B cell (primary cell): ENCODE measurements at regions of chr6 and their contacts with region 1.

Region 1: GRCh38 chr6:150417899-150418826 is 49.4 kb downstream of the IYD start:
- DNase-seq: peak; percentile 84
- ATAC-seq: peak; percentile 82
- H3K4me3 ChIP-seq: peak overlapping the region; percentile 45 to 75 (median 63)
- H3K4me3 Mint-ChIP-seq: peak overlapping the region; percentile 91
- H3K27ac ChIP-seq: peak overlapping the region in 1 of 2 donors; percentile 73
- H3K27ac Mint-ChIP-seq: peak overlapping the region; percentile 22
- H3K4me1 ChIP-seq: peaks cover 0 to 5% of the 10 kb centered on the region in 2 donors
- H3K4me1 Mint-ChIP-seq: peaks cover 14% of the 10 kb centered on the region
- H3K27me3 ChIP-seq: peaks cover 0 to 4% (median 2%) of the 10 kb centered on the region in 4 experiments
- H3K27me3 Mint-ChIP-seq: peaks cover 23% of the 10 kb centered on the region
- CTCF ChIP-seq: peak; percentile 79

Region 2: DNA sequence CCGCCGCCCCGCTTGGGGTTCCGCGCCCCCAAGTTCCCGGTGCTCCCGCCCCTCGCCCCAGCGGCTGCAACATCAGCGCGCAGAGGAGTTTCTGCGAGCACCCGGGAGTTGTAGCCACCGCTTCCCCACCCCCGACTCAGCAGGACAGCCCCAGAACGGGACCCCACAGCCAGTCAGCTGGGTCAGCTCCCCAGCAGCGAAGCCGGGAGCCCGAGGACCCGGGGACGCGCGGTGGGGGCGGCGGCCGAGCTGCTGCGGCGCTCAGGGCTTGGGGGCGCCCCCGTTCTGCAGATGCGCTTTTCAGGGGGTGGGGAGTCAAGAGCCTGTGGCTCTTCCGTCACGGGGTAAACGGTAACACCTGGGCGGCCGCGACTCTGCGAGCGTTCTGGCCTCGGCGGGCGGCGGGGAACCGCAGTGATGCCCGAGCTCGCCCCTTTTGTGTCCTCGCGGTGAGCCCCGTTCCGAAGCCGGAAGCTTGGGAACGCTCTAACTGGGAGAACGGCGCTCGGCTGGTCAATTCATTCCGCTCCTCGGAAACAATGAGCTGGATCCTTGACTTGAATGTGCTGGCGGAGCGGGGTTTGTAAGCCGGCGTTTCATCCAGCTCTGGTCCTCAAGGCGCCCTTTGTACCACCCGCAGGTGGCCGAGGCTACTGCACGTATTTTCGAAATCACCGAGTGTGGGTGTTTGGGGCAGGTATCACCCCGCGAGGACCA is 182.3 kb after region 1 on chr6:
- CTCF ChIA-PET with region 1: interaction called, 71 read pairs
- POLR2A ChIA-PET with region 1: interaction called, 5 read pairs
- intact Hi-C with region 1: loop called (anchors 1 kb)
- DNase-seq: peak; percentile 95
- ATAC-seq: peak; percentile 75
- H3K4me3 ChIP-seq: peak overlapping the region; percentile 56 to 83 (median 73)
- H3K4me3 Mint-ChIP-seq: peak overlapping the region; percentile 99
- H3K27ac ChIP-seq: peak overlapping the region; percentile 97 to 99
- H3K27ac Mint-ChIP-seq: peak overlapping the region; percentile 99
- H3K4me1 ChIP-seq: peaks cover 52 to 54% of the 10 kb centered on the region in 2 donors
- H3K4me1 Mint-ChIP-seq: peaks cover 65% of the 10 kb centered on the region
- H3K27me3 ChIP-seq: no peaks in the 10 kb centered on the region
- H3K27me3 Mint-ChIP-seq: no peaks in the 10 kb centered on the region
- CTCF ChIP-seq: peak; percentile 76

Region 3: DNA sequence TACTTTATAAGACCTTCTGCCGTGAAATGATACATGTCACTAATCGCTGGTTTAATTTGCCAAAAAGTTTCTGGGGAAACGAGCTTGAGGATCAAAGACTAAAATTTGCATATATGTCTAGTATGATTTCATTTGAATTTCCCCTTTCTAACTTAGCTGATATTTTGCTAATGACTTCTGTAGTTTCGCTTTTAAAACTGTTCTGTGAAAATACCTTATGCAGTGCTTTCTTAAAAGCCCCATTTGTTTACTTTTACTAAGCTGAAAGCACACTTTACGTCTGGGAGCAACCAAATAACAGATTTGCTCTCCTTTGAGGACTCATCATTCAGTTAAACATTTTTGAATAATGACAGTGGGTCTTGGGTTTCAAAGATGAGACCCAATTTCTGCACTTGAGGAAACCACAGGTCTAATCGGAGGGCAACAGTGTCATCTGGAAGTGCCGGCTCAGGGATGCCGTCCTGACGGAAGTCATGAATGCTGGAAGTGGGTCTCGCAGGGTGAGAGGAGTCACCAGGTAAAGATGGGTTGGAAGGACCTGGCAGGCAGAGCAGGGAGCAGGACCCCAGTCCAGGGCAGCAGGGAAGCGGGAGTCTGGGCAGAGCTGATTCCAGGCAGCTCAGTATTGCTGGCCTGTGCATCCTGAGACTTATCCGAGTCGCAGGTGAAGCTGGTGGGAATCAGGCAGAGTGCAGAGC is 214.8 kb after region 1 on chr6:
- CTCF ChIA-PET with region 1: interaction called, 16 read pairs
- POLR2A ChIA-PET with region 1: no interaction called
- intact Hi-C with region 1: loop called (anchors 5 kb)
- DNase-seq: peak; percentile 80
- ATAC-seq: peak; percentile 40
- H3K4me3 ChIP-seq: peak overlapping the region; percentile 55 to 85 (median 79)
- H3K4me3 Mint-ChIP-seq: peak overlapping the region; percentile 98
- H3K27ac ChIP-seq: peak overlapping the region; percentile 91 to 94
- H3K27ac Mint-ChIP-seq: peak overlapping the region; percentile 93
- H3K4me1 ChIP-seq: peaks cover 79 to 81% of the 10 kb centered on the region in 2 donors
- H3K4me1 Mint-ChIP-seq: peaks cover 85% of the 10 kb centered on the region
- H3K27me3 ChIP-seq: no peaks in the 10 kb centered on the region
- H3K27me3 Mint-ChIP-seq: no peaks in the 10 kb centered on the region
- CTCF ChIP-seq: no peak

Region 4: DNA sequence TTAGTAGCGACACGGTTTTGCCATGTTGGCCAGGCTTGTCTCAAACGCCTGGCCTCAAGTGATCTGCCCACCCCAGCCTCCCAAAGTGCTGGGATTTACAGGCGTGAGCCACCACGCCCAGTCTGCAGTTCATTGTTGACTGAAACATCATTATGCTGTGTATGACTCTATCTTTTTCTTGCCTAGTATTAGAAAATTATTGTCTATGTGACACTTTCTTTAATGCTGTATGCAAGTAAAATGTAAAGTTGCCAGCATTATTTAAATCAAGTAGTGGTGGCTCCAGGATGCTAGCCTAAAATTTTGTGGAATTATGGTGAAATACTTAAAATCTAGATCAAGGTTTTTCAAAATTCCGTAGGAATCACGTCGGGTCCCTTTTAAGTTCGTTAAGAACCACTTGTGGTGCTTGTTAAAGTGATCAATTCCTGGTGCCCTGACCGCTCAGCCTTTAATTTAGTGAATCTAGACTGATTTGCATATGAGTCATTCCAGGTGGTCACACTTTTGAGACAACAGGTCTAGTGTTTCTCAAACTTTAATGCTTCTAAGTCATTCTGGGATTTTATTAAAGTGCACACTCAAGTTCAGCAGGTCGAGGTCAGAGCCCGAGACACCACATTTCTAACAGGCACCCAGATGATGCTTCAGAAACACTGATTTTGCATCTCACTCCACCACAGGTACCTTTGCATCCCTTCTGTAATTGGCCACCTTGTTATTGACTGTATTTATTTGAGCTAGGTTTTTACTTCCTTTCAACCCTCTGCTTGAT is 314.8 kb after region 1 on chr6:
- CTCF ChIA-PET with region 1: interaction called, 19 read pairs
- POLR2A ChIA-PET with region 1: no interaction called
- intact Hi-C with region 1: no loop called
- DNase-seq: peak; percentile 19
- ATAC-seq: peak; percentile 60
- H3K4me3 ChIP-seq: no peak overlapping the region
- H3K4me3 Mint-ChIP-seq: peak overlapping the region; percentile 30
- H3K27ac ChIP-seq: peak overlapping the region in 1 of 2 donors; percentile 20
- H3K27ac Mint-ChIP-seq: peak overlapping the region; percentile 73
- H3K4me1 ChIP-seq: peaks cover 8 to 14% of the 10 kb centered on the region in 2 donors
- H3K4me1 Mint-ChIP-seq: peaks cover 53% of the 10 kb centered on the region
- H3K27me3 ChIP-seq: no peaks in the 10 kb centered on the region
- H3K27me3 Mint-ChIP-seq: no peaks in the 10 kb centered on the region
- CTCF ChIP-seq: no peak

Region 5: DNA sequence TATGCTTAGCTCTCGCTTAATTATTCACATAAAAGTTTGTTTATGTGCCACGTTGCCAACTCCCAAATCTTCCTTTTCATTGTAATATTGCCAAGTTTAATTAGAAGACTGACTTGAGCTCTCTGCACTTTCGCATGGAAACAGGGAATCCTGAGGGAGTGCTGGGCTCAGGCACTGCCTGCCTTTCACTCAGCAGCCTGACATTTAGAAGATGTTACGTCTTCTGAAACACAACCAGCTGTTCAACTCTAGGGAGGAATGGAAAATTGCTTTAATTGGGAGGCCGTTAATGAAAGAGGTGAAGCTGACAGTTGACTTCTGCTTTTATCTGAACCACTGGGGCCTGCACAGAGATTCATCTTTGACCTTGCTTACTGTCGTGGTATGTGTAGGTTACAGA is 369.9 kb after region 1 on chr6:
- CTCF ChIA-PET with region 1: interaction called, 16 read pairs
- POLR2A ChIA-PET with region 1: no interaction called
- intact Hi-C with region 1: no loop called
- DNase-seq: no peak
- ATAC-seq: no peak
- H3K4me3 ChIP-seq: no peak overlapping the region
- H3K4me3 Mint-ChIP-seq: no peak overlapping the region
- H3K27ac ChIP-seq: peak overlapping the region in 1 of 2 donors; percentile 58
- H3K27ac Mint-ChIP-seq: peak overlapping the region; percentile 66
- H3K4me1 ChIP-seq: peaks cover 0 to 4% of the 10 kb centered on the region in 2 donors
- H3K4me1 Mint-ChIP-seq: peaks cover 19% of the 10 kb centered on the region
- H3K27me3 ChIP-seq: no peaks in the 10 kb centered on the region
- H3K27me3 Mint-ChIP-seq: no peaks in the 10 kb centered on the region
- CTCF ChIP-seq: no peak

Region 6: GRCh38 chr6:150865406-150866146 is 447.4 kb after region 1 on chr6 and contains the start of gene MTHFD1L:
- CTCF ChIA-PET with region 1: interaction called, 3 read pairs
- POLR2A ChIA-PET with region 1: no interaction called
- intact Hi-C with region 1: loop called (anchors 2 kb)
- DNase-seq: peak; percentile 84
- ATAC-seq: peak; percentile 72
- H3K4me3 ChIP-seq: peak within 1 kb of the TSS in 4 of 5 experiments; percentile 57 to 73 (median 66)
- H3K4me3 Mint-ChIP-seq: peak within 1 kb of the TSS; percentile 85
- H3K27ac ChIP-seq: peak within 1 kb of the TSS in 1 of 2 donors; percentile 63
- H3K27ac Mint-ChIP-seq: peak within 1 kb of the TSS; percentile 65
- H3K4me1 ChIP-seq: peaks cover 9 to 13% of the 10 kb centered on the region in 2 donors
- H3K4me1 Mint-ChIP-seq: peaks cover 19% of the 10 kb centered on the region
- H3K27me3 ChIP-seq: no peaks in the 10 kb centered on the region
- H3K27me3 Mint-ChIP-seq: no peaks in the 10 kb centered on the region
- CTCF ChIP-seq: peak; percentile 54
- total RNA-seq, gene MTHFD1L: 16.1 and 23.4 TPM in 2 replicates